ENCODE measurements at regions of chr4 and their contacts with region 1.

Region 1: GRCh38 chr4:74531963-74532794 is 87.2 kb downstream of the AREG start:
- DNase-seq: peak; percentile 91
- H3K4me3 Mint-ChIP-seq: no peak overlapping the region
- H3K27ac Mint-ChIP-seq: peak overlapping the region; percentile 80
- H3K4me1 Mint-ChIP-seq: peaks cover 20% of the 10 kb centered on the region
- H3K27me3 Mint-ChIP-seq: no peaks in the 10 kb centered on the region
- CTCF ChIP-seq: peak; percentile 77

Region 2: DNA sequence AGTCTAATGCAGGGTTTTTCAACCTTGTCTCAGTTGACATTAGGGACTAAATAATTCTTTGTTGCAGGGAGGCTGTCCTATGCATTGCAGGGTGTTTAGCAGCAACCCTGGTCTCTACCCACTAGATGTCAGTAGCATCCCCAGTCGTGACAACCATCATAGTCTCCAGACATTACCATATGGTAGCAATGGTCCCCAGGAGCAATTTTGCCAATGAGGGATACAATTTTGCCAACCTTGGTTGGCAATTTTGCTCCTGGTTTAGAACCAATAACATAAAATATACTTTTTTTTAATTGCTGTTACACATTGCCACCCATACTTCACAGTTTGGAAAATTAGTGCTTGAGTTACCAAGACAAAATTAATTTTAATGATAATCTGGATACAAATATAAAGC is 161.3 kb before region 1 on chr4:
- CTCF ChIA-PET with region 1: interaction called, 148 read pairs
- POLR2A ChIA-PET with region 1: interaction called, 72 read pairs
- intact Hi-C with region 1: loop called (anchors 1 kb)
- DNase-seq: peak; percentile 84
- H3K4me3 Mint-ChIP-seq: no peak overlapping the region
- H3K27ac Mint-ChIP-seq: no peak overlapping the region
- H3K4me1 Mint-ChIP-seq: peaks cover 35% of the 10 kb centered on the region
- H3K27me3 Mint-ChIP-seq: no peaks in the 10 kb centered on the region
- CTCF ChIP-seq: peak; percentile 83

Region 3: DNA sequence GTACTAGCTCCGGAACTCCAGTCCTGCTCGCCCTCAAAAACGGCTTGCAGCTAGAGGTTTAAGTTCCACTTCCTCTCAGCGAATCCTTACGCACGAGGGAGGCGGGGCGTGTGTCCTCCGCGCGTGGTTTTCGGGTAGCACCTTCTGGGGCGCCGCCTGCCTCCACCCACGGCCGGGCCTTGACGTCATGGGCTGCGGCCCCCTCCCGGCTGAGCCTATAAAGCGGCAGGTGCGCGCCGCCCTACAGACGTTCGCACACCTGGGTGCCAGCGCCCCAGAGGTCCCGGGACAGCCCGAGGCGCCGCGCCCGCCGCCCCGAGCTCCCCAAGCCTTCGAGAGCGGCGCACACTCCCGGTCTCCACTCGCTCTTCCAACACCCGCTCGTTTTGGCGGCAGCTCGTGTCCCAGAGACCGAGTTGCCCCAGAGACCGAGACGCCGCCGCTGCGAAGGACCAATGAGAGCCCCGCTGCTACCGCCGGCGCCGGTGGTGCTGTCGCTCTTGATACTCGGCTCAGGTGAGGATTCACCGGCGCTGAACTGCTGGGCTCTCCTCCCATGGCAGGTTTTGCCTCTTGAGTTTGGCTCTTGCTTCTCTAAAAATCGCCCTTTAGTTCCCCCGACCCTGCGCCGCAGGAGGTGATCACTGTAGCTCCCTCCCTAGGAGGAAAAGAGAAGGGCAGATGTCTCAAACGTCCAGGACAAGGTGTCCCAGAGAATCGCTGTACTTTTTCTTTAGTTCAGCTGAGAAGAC is 87.1 kb before region 1 on chr4 and contains the start of gene AREG:
- CTCF ChIA-PET with region 1: interaction called, 47 read pairs
- POLR2A ChIA-PET with region 1: interaction called, 27 read pairs
- intact Hi-C with region 1: loop called (anchors 1 kb)
- DNase-seq: peak; percentile 90
- H3K4me3 Mint-ChIP-seq: peak within 1 kb of the TSS; percentile 95
- H3K27ac Mint-ChIP-seq: peak within 1 kb of the TSS; percentile 37
- H3K4me1 Mint-ChIP-seq: peaks cover 21% of the 10 kb centered on the region
- H3K27me3 Mint-ChIP-seq: no peaks in the 10 kb centered on the region
- CTCF ChIP-seq: peak; percentile 44
- total RNA-seq, gene AREG: 1,402 and 1,878 TPM in 2 replicates

Region 4: GRCh38 chr4:74473155-74473811 is 58.9 kb before region 1 on chr4:
- CTCF ChIA-PET with region 1: interaction called, 15 read pairs
- POLR2A ChIA-PET with region 1: interaction called, 28 read pairs
- intact Hi-C with region 1: no loop called
- DNase-seq: peak; percentile 85
- H3K4me3 Mint-ChIP-seq: no peak overlapping the region
- H3K27ac Mint-ChIP-seq: no peak overlapping the region
- H3K4me1 Mint-ChIP-seq: peaks cover 37% of the 10 kb centered on the region
- H3K27me3 Mint-ChIP-seq: no peaks in the 10 kb centered on the region
- CTCF ChIP-seq: no peak

Region 5: GRCh38 chr4:74623041-74623440 is 90.9 kb after region 1 on chr4:
- CTCF ChIA-PET with region 1: interaction called, 49 read pairs
- POLR2A ChIA-PET with region 1: interaction called, 6 read pairs
- intact Hi-C with region 1: loop called (anchors 1 kb)
- DNase-seq: peak; percentile 74
- H3K4me3 Mint-ChIP-seq: no peak overlapping the region
- H3K27ac Mint-ChIP-seq: no peak overlapping the region
- H3K4me1 Mint-ChIP-seq: peaks cover 52% of the 10 kb centered on the region
- H3K27me3 Mint-ChIP-seq: no peaks in the 10 kb centered on the region
- CTCF ChIP-seq: peak; percentile 47

Region 6: DNA sequence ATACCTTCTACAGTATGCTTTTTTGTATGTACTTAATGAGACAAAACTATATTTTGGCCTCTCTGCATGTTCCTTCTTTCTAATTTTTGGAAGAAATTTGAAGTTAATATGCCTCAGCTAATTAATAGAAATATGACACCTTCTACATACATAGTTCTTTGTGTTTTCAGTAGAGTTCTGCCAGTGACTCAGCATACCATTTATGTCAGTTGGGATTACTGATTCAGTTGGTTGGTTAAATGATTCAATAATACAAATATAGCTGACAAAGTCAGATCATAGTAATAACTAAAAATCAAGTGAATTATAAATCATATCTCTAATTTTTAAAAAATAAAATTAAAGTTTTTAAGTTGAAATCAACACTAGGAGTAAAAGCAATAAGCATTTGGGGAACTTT is 245.4 kb after region 1 on chr4:
- CTCF ChIA-PET with region 1: no interaction called
- POLR2A ChIA-PET with region 1: no interaction called
- intact Hi-C with region 1: no loop called
- DNase-seq: no peak
- H3K4me3 Mint-ChIP-seq: no peak overlapping the region
- H3K27ac Mint-ChIP-seq: no peak overlapping the region
- H3K4me1 Mint-ChIP-seq: peaks cover 5% of the 10 kb centered on the region
- H3K27me3 Mint-ChIP-seq: no peaks in the 10 kb centered on the region
- CTCF ChIP-seq: no peak

Measured in MCF 10A (cell line).